GM12878 (cell line): ENCODE measurements at regions of chr6 and their contacts with region 1.

Region 1: DNA sequence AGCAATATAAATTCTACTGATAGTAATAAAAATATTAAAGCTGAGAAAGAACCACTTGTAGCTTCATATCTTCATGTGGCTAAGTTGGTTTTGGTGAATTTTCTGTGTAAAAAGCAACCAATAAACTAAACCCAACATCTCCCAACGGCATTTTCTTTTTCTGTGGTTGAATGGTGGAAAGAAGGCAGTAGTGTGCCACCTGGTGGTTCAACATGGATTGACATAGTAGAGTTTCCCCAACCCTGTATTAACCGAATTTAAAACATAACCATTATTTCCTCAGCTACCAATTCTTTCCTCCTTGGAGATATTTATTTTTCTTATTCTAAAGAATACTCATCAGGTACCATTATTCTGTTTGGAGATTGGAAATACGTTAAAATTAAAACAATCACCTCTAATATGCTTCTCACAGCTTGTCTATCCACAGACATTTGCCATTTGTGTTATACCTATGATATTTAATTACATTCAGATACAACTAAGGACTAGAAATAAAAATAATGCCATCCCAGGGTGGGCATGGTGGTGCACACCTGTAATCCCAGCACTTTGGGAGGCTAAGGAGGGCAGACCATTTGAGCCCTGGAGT is 117.1 kb upstream of the EEF1E1 start:
- DNase-seq: no peak
- ATAC-seq: peak; percentile 84
- H3K4me3 ChIP-seq: no peak overlapping the region
- H3K27ac ChIP-seq: no peak overlapping the region
- H3K4me1 ChIP-seq: no peaks in the 10 kb centered on the region
- H3K27me3 ChIP-seq: no peaks in the 10 kb centered on the region; a peak in 2 of 4 replicates
- CTCF ChIP-seq: peak; percentile 63 to 76 (median 70)
- EP300 ChIP-seq: no peak
- POLR2A ChIP-seq: no peak
- RAD21 ChIP-seq: peak; percentile 85

Region 2: GRCh38 chr6:7725849-7726415 is 493.5 kb before region 1 on chr6 and contains the start of gene BMP6:
- CTCF ChIA-PET with region 1: interaction called, 32 read pairs
- POLR2A ChIA-PET with region 1: no interaction called
- RAD21 ChIA-PET with region 1: interaction called, 12 read pairs
- SMC1A ChIA-PET with region 1: interaction called, 7 read pairs
- in situ Hi-C with region 1: loop called (anchors 5 kb)
- intact Hi-C with region 1: loop called (anchors 5 kb)
- DNase-seq: no peak
- ATAC-seq: peak; percentile 88
- H3K4me3 ChIP-seq: peak within 1 kb of the TSS; percentile 63
- H3K27ac ChIP-seq: no peak within 1 kb of the TSS
- H3K4me1 ChIP-seq: peaks cover 3% of the 10 kb centered on the region; the same call in 1 of the 2 replicates
- H3K27me3 ChIP-seq: peaks cover 12 to 26% of the 10 kb centered on the region in 2 experiments
- CTCF ChIP-seq: no peak
- EP300 ChIP-seq: no peak
- POLR2A ChIP-seq: no peak
- RAD21 ChIP-seq: no peak
- polyA plus RNA-seq, gene BMP6: 0.02 to 0.11 TPM

Region 3: GRCh38 chr6:8102122-8102958 is 117.1 kb before region 1 on chr6 and contains the start of gene EEF1E1:
- CTCF ChIA-PET with region 1: interaction called, 11 read pairs
- POLR2A ChIA-PET with region 1: no interaction called
- RAD21 ChIA-PET with region 1: interaction called, 3 read pairs
- SMC1A ChIA-PET with region 1: interaction called, 7 read pairs
- in situ Hi-C with region 1: no loop called
- intact Hi-C with region 1: no loop called
- DNase-seq: peak; percentile 77
- ATAC-seq: peak; percentile 99
- H3K4me3 ChIP-seq: peak within 1 kb of the TSS; percentile 83
- H3K27ac ChIP-seq: peak within 1 kb of the TSS; percentile 57
- H3K4me1 ChIP-seq: peaks cover 3% of the 10 kb centered on the region
- H3K27me3 ChIP-seq: no peaks in the 10 kb centered on the region
- CTCF ChIP-seq: no peak
- EP300 ChIP-seq: no peak
- POLR2A ChIP-seq: peak; percentile 86
- RAD21 ChIP-seq: no peak
- polyA plus RNA-seq, gene EEF1E1: 594 to 668 TPM

Region 4: GRCh38 chr6:8137529-8137939 is 81.9 kb before region 1 on chr6:
- CTCF ChIA-PET with region 1: interaction called, 335 read pairs
- POLR2A ChIA-PET with region 1: interaction called, 3 read pairs
- RAD21 ChIA-PET with region 1: interaction called, 203 read pairs
- SMC1A ChIA-PET with region 1: interaction called, 147 read pairs
- in situ Hi-C with region 1: loop called (anchors 5 kb)
- intact Hi-C with region 1: no loop called
- DNase-seq: no peak
- ATAC-seq: no peak
- H3K4me3 ChIP-seq: no peak overlapping the region
- H3K27ac ChIP-seq: no peak overlapping the region
- H3K4me1 ChIP-seq: no peaks in the 10 kb centered on the region
- H3K27me3 ChIP-seq: peaks cover 0 to 3% of the 10 kb centered on the region in 2 experiments; a peak in 2 of 4 replicates
- CTCF ChIP-seq: no peak
- EP300 ChIP-seq: no peak
- POLR2A ChIP-seq: no peak
- RAD21 ChIP-seq: no peak

Region 5: DNA sequence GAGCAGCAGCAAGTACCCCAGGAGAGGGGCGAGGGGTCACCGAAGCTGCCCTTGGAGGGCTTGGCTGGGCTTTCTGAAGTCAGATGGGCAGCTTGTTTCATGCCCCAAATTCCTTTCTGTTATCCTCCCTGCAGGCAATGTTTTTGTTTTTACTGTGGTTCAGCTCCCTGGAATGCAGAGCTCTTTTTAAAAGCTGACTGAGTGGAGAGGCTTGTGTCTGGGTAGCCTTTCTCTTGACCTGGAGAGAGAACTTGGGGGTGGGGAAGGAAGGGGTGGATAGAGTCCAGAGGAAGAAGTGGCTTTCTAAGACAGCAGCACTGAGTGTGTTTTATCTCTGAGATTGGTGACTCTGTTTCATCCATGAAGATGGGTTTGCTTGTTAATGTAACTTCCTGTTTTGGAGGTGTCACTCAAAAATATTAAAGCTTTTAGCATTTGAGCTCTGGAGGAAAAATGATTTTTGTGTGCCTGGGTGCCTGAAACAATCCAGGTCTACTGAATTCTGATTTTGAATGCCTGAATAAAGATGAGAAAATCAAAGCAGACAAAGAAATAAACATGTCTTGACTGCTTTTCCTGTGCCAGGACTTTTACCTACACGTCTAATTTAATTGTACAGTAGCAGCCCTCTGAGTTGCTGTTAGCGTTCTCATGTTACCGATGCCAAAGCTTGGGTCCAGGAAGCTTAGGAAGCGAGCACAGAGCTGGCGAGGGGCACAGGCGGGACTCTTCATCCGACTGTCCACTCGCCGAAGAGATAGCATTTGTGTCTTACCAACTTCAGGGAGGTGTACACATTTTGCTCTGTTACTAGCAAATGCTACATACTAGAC is 38.9 kb before region 1 on chr6:
- CTCF ChIA-PET with region 1: interaction called, 17 read pairs
- POLR2A ChIA-PET with region 1: no interaction called
- RAD21 ChIA-PET with region 1: interaction called, 17 read pairs
- SMC1A ChIA-PET with region 1: interaction called, 12 read pairs
- in situ Hi-C with region 1: no loop called
- intact Hi-C with region 1: no loop called
- DNase-seq: no peak
- ATAC-seq: no peak
- H3K4me3 ChIP-seq: no peak overlapping the region
- H3K27ac ChIP-seq: no peak overlapping the region
- H3K4me1 ChIP-seq: no peaks in the 10 kb centered on the region
- H3K27me3 ChIP-seq: no peaks in the 10 kb centered on the region
- CTCF ChIP-seq: no peak
- EP300 ChIP-seq: no peak
- POLR2A ChIP-seq: no peak
- RAD21 ChIP-seq: no peak

Region 6: GRCh38 chr6:8229915-8230756 is 10.7 kb after region 1 on chr6:
- CTCF ChIA-PET with region 1: interaction called, 10 read pairs
- POLR2A ChIA-PET with region 1: no interaction called
- RAD21 ChIA-PET with region 1: interaction called, 3 read pairs
- SMC1A ChIA-PET with region 1: interaction called, 4 read pairs
- in situ Hi-C with region 1: no loop called
- intact Hi-C with region 1: no loop called
- DNase-seq: no peak
- ATAC-seq: no peak
- H3K4me3 ChIP-seq: no peak overlapping the region
- H3K27ac ChIP-seq: no peak overlapping the region
- H3K4me1 ChIP-seq: no peaks in the 10 kb centered on the region
- H3K27me3 ChIP-seq: no peaks in the 10 kb centered on the region
- CTCF ChIP-seq: no peak
- EP300 ChIP-seq: no peak
- POLR2A ChIP-seq: no peak
- RAD21 ChIP-seq: no peak